ENCODE measurements at regions of chr10 and their contacts with region 1.

Region 1: DNA sequence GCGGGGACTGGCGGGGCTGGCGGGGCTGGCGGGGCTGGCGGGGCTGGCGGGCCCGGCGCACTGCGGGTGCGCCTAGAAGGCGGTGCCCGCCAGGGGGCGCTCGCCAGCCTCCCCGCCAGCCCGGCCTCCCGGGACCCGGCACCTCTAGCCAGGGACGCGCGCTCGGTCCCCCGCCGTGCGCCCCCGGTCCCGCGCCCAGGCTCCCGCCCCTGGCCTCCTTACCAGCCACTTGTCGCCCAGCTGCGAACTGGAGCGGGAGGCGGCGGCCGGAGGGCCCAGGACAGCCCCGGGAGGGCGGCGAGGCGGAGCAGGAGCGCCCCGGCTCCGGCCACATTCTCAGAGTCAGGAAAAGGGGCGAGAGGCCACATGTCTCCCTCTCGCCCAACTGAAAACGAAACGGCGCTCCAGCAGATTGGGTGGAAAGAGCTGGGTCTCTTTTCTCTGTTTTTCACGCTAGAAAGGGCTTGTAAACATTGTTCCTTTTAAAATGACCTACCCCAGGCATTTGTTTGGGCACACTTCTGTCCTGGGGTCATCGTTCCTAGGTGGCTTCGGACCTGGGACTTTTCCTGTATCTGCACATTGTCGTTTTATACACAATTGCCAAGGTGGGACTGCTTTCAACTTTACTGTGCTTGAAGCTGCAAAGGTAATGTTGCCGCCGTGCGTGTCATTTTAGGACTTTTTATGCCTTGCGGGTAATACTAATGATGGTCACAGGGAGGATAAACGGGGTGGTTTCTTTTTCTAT is 378 bp upstream of the PRKCQ start:
- DNase-seq: peak; percentile 86
- H3K4me3 Mint-ChIP-seq: peak overlapping the region; percentile 92
- H3K27ac Mint-ChIP-seq: peak overlapping the region; percentile 99
- H3K4me1 Mint-ChIP-seq: peaks cover 39% of the 10 kb centered on the region
- H3K27me3 Mint-ChIP-seq: no peaks in the 10 kb centered on the region

Region 2: GRCh38 chr10:6416892-6417512 is 163.5 kb before region 1 on chr10:
- CTCF ChIA-PET with region 1: interaction called, 3 read pairs
- intact Hi-C with region 1: loop called (anchors 2 kb)
- DNase-seq: no peak
- H3K4me3 Mint-ChIP-seq: no peak overlapping the region
- H3K27ac Mint-ChIP-seq: no peak overlapping the region
- H3K4me1 Mint-ChIP-seq: no peaks in the 10 kb centered on the region
- H3K27me3 Mint-ChIP-seq: no peaks in the 10 kb centered on the region

Region 3: DNA sequence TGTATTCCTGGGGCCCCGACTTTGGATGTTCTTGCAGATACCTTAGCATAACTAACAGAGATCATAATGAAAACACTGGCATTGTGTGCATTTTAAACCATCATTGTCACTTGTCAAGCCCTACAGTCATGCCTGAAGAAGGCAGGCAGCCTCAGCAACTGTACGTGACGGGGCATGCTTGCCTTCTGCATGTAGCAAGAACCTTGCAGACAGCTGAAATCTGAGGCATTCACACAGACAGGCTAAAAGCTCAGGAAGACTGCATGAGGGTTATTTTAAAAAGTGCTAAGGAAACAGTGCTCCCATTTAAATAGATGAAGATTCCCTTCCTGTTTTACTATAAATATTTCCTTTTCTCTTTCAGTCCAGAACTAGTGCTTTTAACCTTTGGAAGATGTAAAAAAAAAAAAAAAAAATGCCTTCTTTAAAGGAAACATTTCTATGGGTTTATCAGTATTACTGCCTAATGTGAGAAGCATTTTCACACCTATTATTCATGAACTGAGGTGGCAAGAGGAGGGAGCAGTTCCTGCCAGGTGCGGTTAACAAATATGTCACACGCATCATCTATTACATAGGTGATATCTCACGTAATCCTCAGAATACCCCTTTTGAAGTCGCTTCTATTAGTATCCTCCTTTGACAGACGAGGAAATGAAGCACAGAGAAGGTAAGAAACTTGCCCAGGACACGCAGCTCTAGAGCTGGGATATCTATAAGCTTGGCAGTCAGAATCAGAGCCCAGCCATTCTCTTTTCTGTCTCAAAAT is 88.4 kb before region 1 on chr10:
- CTCF ChIA-PET with region 1: no interaction called
- intact Hi-C with region 1: loop called (anchors 1 kb)
- DNase-seq: peak; percentile 59
- H3K4me3 Mint-ChIP-seq: peak overlapping the region; percentile 68
- H3K27ac Mint-ChIP-seq: peak overlapping the region; percentile 91
- H3K4me1 Mint-ChIP-seq: peaks cover 31% of the 10 kb centered on the region
- H3K27me3 Mint-ChIP-seq: no peaks in the 10 kb centered on the region

Region 4: DNA sequence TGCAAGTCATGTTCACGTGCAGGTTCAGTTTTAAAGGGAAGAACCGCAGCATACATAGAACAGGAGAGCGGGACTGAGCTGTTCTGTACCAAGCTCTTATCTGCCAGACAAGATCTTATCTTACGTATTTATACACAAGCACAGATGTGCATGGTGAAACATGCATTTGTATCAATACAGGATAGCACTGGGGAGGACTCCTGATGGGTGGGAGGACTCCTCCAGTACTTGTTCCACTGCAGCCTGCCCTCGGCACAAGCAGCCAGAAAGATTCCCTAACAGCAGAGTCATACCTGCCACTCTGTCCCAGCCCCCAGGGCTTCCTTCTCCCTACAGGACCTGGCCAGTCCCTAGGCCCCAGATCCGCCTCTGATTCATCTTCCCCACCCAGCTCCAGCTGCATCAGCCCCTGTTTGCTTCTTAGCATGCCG is 12.8 kb after region 1 on chr10:
- CTCF ChIA-PET with region 1: interaction called, 37 read pairs
- intact Hi-C with region 1: loop called (anchors 1 kb)
- DNase-seq: peak; percentile 54
- H3K4me3 Mint-ChIP-seq: peak overlapping the region; percentile 55
- H3K27ac Mint-ChIP-seq: peak overlapping the region; percentile 96
- H3K4me1 Mint-ChIP-seq: peaks cover 89% of the 10 kb centered on the region
- H3K27me3 Mint-ChIP-seq: no peaks in the 10 kb centered on the region

Region 5: GRCh38 chr10:6625428-6625827 is 45.0 kb after region 1 on chr10:
- CTCF ChIA-PET with region 1: no interaction called
- intact Hi-C with region 1: no loop called
- DNase-seq: peak; percentile 68
- H3K4me3 Mint-ChIP-seq: no peak overlapping the region
- H3K27ac Mint-ChIP-seq: no peak overlapping the region
- H3K4me1 Mint-ChIP-seq: peaks cover 26% of the 10 kb centered on the region
- H3K27me3 Mint-ChIP-seq: no peaks in the 10 kb centered on the region

Region 6: GRCh38 chr10:6647811-6648526 is 67.5 kb after region 1 on chr10:
- CTCF ChIA-PET with region 1: interaction called, 48 read pairs
- intact Hi-C with region 1: loop called (anchors 1 kb)
- DNase-seq: peak; percentile 91
- H3K4me3 Mint-ChIP-seq: peak overlapping the region; percentile 12
- H3K27ac Mint-ChIP-seq: peak overlapping the region; percentile 70
- H3K4me1 Mint-ChIP-seq: peaks cover 62% of the 10 kb centered on the region
- H3K27me3 Mint-ChIP-seq: no peaks in the 10 kb centered on the region

Region 7: GRCh38 chr10:7027913-7028808 is 447.7 kb after region 1 on chr10:
- CTCF ChIA-PET with region 1: no interaction called
- intact Hi-C with region 1: no loop called
- DNase-seq: no peak
- H3K4me3 Mint-ChIP-seq: no peak overlapping the region
- H3K27ac Mint-ChIP-seq: no peak overlapping the region
- H3K4me1 Mint-ChIP-seq: peaks cover 18% of the 10 kb centered on the region
- H3K27me3 Mint-ChIP-seq: no peaks in the 10 kb centered on the region

Measured in activated naive CD4-positive, alpha-beta T cell treated with anti-CD3 and anti-CD28 coated beads for 36 hours (primary cell).